ENCODE measurements at regions of chr4 and their contacts with region 1.

Region 1: GRCh38 chr4:42371306-42372252 is 25.7 kb upstream of the SHISA3 start:
- DNase-seq: no peak
- ATAC-seq: peak in 3 of 4 donors; percentile 53 to 58 (median 56)
- H3K4me3 ChIP-seq: no peak overlapping the region
- H3K27ac ChIP-seq: no peak overlapping the region
- H3K4me1 ChIP-seq: no peaks in the 10 kb centered on the region
- H3K27me3 ChIP-seq: no peaks in the 10 kb centered on the region
- CTCF ChIP-seq: peak; percentile 32 to 73 (median 58)
- POLR2A ChIP-seq: no peak

Region 2: DNA sequence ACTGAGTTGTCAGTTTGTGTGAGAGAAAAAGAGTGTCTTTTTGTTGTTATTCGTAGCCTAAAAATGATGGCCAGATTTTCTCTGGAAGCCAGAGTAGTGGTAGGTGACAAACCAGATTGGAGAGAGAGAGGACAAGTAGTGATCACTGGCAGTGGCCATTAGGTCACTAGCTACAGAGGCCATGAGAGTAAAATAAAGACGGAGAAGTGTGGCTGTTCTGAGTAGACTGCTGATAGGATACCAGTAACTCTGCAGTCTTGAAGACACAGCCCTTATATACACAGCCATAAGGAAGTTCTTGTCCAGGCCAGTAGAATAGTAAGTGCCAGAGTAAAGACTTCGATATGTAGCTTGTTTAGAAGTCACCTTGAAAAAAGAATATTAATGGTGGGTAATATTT is 373.6 kb before region 1 on chr4:
- intact Hi-C with region 1: no loop called
- DNase-seq: no peak
- ATAC-seq: peak; percentile 49 to 77 (median 73)
- H3K4me3 ChIP-seq: no peak overlapping the region
- H3K27ac ChIP-seq: peak overlapping the region in 9 of 12 donors; percentile 6 to 64 (median 48)
- H3K4me1 ChIP-seq: peaks cover 0 to 21% (median 0%) of the 10 kb centered on the region in 12 donors
- H3K27me3 ChIP-seq: no peaks in the 10 kb centered on the region
- CTCF ChIP-seq: no peak
- POLR2A ChIP-seq: no peak

Region 3: GRCh38 chr4:42519803-42520417 is 148.3 kb after region 1 on chr4:
- intact Hi-C with region 1: loop called (anchors 1 to 5 kb)
- DNase-seq: peak in 1 of 5 donors; percentile 23
- ATAC-seq: peak in 3 of 4 donors; percentile 33 to 62 (median 59)
- H3K4me3 ChIP-seq: no peak overlapping the region
- H3K27ac ChIP-seq: no peak overlapping the region
- H3K4me1 ChIP-seq: peaks cover 0 to 23% (median 7%) of the 10 kb centered on the region in 12 donors
- H3K27me3 ChIP-seq: no peaks in the 10 kb centered on the region
- CTCF ChIP-seq: peak; percentile 57 to 79 (median 69)
- POLR2A ChIP-seq: no peak

Region 4: DNA sequence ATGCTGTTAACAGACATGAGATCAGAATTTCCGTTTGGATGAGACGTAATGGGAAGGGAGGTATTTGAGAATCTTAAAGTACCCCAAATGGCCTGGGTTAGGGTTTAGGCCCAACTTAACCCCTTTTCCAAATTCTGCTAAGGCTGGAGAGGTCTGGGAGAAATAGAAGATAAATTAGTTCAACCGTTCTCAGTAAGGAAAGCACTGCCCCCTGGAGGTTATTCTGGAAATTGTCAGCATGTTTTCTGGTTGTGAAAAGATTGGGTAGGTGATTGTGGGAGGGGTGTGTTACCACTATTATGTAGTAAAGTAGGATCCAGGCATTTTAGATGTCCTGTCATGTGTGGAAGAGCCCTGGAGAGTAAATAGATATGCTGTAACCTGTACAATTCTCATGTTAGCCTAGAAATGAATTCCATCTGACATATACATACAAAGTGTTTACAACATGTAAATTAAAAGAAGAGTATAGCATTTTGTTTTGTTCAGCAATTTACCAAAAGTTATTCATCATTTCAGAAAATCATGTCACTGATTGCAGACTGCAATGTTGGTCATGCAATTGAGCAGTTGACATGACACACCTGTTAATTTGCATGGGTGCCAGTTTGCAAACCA is 494.1 kb after region 1 on chr4:
- intact Hi-C with region 1: loop called in 1 of 10 experiments (anchors 10 kb)
- DNase-seq: peak in 3 of 5 donors; percentile 16 to 28 (median 24)
- ATAC-seq: no peak
- H3K4me3 ChIP-seq: no peak overlapping the region
- H3K27ac ChIP-seq: no peak overlapping the region
- H3K4me1 ChIP-seq: no peaks in the 10 kb centered on the region
- H3K27me3 ChIP-seq: peaks cover 0 to 4% (median 0%) of the 10 kb centered on the region in 9 donors
- CTCF ChIP-seq: peak; percentile 61 to 81 (median 70)
- POLR2A ChIP-seq: no peak